Ovary (tissue), 10 donors: ENCODE measurements at regions of chr6 and their contacts with region 1.

Region 1: DNA sequence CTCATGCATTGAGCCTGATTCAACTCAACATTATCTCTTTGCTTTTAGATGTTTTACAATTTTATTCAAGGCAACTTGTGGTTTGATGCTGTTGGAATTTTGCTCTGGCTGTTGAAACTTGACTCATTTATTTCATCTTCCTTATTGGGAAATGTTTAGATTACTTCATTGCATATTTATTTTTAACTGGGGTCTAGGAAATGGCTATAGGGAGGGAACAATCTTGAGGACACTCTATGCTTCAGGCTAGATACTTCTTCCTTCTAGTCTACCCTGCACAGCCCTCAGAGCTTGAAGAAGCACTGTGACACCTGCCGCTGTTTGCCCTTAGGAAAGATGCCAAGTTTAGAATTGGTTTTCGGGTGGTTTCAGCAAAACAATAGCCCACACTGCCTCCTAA is 183.4 kb downstream of the ADGRG6 start:
- DNase-seq: no peak
- H3K4me3 ChIP-seq: no peak overlapping the region
- H3K27ac ChIP-seq: no peak overlapping the region
- H3K4me1 ChIP-seq: no peaks in the 10 kb centered on the region
- H3K27me3 ChIP-seq: no peaks in the 10 kb centered on the region
- CTCF ChIP-seq: no peak
- EP300 ChIP-seq: no peak
- POLR2A ChIP-seq: no peak

Region 2: GRCh38 chr6:142353690-142354089 is 131.6 kb before region 1 on chr6:
- intact Hi-C with region 1: no loop called
- DNase-seq: no peak
- H3K4me3 ChIP-seq: no peak overlapping the region
- H3K27ac ChIP-seq: no peak overlapping the region
- H3K4me1 ChIP-seq: no peaks in the 10 kb centered on the region
- H3K27me3 ChIP-seq: no peaks in the 10 kb centered on the region
- CTCF ChIP-seq: no peak
- EP300 ChIP-seq: no peak
- POLR2A ChIP-seq: no peak

Region 3: GRCh38 chr6:143337201-143337949 is 852.1 kb after region 1 on chr6:
- intact Hi-C with region 1: loop called in 1 of 4 experiments (anchors 10 kb)
- DNase-seq: peak in 3 of 5 donors; percentile 16 to 51 (median 44)
- H3K4me3 ChIP-seq: no peak overlapping the region
- H3K27ac ChIP-seq: no peak overlapping the region
- H3K4me1 ChIP-seq: peaks cover 1% of the 10 kb centered on the region
- H3K27me3 ChIP-seq: no peaks in the 10 kb centered on the region
- CTCF ChIP-seq: no peak
- EP300 ChIP-seq: no peak
- POLR2A ChIP-seq: no peak